OCI-LY7 (cell line): ENCODE measurements at regions of chr22 and their contacts with region 1.

Region 1: DNA sequence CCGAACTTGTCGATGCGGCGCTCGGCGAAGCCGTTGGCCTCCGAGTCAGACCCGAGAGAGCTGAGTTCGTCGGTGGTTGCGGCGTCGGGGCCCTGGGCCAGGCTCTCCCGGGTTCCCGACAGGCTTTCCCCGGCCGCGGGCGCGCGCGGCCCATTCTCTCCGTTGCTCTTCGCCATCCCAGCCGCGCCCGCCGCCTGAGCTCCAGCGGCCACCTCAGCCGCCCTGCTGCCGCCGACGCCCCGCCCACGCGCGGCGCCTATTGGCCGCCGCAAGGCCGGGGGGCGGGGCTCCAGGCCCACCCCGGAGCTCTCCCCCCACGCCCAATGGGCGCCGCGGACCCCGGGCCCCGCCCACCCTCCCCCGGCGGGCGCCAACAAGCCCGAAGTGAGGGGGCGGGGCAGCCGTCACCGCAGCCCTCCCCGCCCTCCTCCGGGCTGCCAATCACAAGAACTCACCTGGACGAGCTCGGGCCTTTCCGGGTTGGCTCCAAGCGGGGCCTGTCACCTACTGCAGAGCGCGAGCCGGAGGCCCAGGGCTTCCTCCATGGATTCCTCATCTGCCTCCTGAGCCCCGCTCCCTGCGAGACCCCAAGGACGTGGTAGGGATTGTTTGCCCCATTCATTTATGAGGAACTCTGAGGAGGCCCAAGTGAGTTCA is at the start of gene TBC1D10A:
- DNase-seq: peak; percentile 96
- H3K4me3 ChIP-seq: peak within 1 kb of the TSS; percentile 90
- H3K27ac ChIP-seq: peak within 1 kb of the TSS; percentile 33
- H3K4me1 ChIP-seq: peaks cover 33% of the 10 kb centered on the region
- CTCF ChIP-seq: no peak
- total RNA-seq, gene TBC1D10A: 15.1 and 15.9 TPM in 2 replicates

Region 2: DNA sequence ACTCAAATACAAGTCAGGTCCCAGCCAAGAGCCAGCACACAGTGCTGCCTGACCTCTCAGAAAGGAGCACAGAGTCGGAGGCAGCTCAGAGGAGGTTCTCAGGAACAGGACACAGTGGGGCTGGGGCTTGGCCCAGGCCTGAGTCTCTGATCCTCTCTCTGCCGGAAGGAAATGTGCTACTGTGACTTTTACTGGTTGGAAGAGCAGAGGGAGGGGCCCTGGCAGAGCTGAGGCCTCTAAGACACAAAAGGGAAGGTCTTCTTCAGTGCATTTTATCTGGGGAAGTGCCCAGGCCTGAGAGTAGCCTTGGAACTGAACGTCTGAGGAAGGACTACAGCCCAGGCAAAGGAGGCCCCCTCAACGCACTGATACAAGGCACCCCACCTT is 21.3 kb before region 1 on chr22:
- CTCF ChIA-PET with region 1: no interaction called
- POLR2A ChIA-PET with region 1: interaction called, 22 read pairs
- intact Hi-C with region 1: loop called (anchors 1 kb)
- DNase-seq: peak; percentile 90
- H3K4me3 ChIP-seq: peak overlapping the region; percentile 61
- H3K27ac ChIP-seq: peak overlapping the region; percentile 94
- H3K4me1 ChIP-seq: peaks cover 96% of the 10 kb centered on the region
- CTCF ChIP-seq: no peak